MCF 10A (cell line): ENCODE measurements at regions of chr5 and their contacts with region 1.

Region 1: DNA sequence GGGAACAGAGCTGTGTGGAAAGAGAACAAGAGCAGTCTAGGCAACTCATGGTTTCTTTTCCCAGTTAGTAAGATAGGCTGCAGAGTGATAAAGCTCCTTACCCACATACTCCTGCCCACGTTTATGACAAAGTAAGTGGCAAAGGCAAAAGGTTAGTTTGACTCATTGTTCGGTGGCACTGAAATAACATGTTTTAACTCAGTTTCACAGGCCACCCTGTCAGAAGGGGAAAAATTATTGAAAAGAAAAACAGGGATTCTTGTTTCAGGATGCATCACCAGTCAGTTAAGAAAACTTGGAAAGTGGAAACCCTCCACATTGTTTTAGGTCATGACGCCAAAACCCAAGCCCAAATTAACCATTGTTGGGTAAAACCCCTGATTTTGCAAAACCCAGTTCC is 22.3 kb upstream of the DAB2 start:
- DNase-seq: peak; percentile 8
- H3K4me3 Mint-ChIP-seq: no peak overlapping the region
- H3K27ac Mint-ChIP-seq: no peak overlapping the region
- H3K4me1 Mint-ChIP-seq: no peaks in the 10 kb centered on the region
- H3K27me3 Mint-ChIP-seq: no peaks in the 10 kb centered on the region
- CTCF ChIP-seq: no peak

Region 2: GRCh38 chr5:39399135-39400036 is 47.7 kb before region 1 on chr5:
- CTCF ChIA-PET with region 1: no interaction called
- POLR2A ChIA-PET with region 1: interaction called, 3 read pairs
- intact Hi-C with region 1: loop called (anchors 1 kb)
- DNase-seq: peak; percentile 94
- H3K4me3 Mint-ChIP-seq: no peak overlapping the region
- H3K27ac Mint-ChIP-seq: peak overlapping the region; percentile 88
- H3K4me1 Mint-ChIP-seq: peaks cover 23% of the 10 kb centered on the region
- H3K27me3 Mint-ChIP-seq: no peaks in the 10 kb centered on the region
- CTCF ChIP-seq: no peak

Region 3: GRCh38 chr5:39411051-39411450 is 36.0 kb before region 1 on chr5:
- CTCF ChIA-PET with region 1: no interaction called
- POLR2A ChIA-PET with region 1: no interaction called
- intact Hi-C with region 1: no loop called
- DNase-seq: peak; percentile 74
- H3K4me3 Mint-ChIP-seq: no peak overlapping the region
- H3K27ac Mint-ChIP-seq: peak overlapping the region; percentile 32
- H3K4me1 Mint-ChIP-seq: peaks cover 15% of the 10 kb centered on the region
- H3K27me3 Mint-ChIP-seq: no peaks in the 10 kb centered on the region
- CTCF ChIP-seq: no peak